ENCODE measurements at regions of chr2 and their contacts with region 1.

Region 1: DNA sequence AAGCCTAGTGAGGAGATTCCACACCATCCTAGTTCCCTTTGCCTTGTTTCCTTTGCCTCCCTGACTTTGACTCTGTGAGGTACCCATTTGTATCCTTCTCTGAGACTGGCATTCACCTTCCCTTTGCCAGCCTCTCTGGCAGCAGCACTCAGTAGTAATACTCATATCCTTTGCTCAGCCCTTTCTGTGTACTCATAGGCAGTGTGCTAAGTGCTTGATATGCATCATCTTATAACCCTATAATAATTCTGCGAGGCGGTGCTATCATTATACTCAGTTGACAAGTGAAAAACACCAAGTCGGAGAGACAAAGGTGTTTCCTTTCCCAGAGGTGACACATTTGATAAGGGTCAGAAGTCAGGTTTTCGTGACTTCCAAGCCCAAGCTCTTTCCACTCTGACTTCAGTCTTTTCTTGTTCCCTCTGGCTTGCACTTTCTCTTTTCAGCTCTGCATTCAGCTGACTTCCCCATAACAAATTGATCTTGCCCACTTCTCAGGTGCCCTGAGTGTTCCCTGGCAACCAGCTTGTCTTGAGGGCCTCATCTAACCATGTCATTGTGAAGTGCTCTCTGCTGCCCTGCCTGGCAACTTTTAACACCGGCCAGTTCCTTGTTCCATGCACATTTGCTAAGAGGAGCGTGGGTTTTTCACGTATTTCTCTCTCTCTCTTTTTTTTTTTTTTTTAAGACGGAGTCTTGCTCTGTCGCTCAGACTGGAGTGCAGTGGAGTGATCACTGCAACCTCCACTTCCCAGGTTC is 94.5 kb upstream of the UPP2 start:
- DNase-seq: peak in 1 of 4 experiments; percentile 26
- ATAC-seq: peak; percentile 64
- H3K4me3 ChIP-seq: no peak overlapping the region
- H3K27ac ChIP-seq: no peak overlapping the region
- H3K4me1 ChIP-seq: peaks cover 0 to 12% of the 10 kb centered on the region in 2 experiments; a peak in 2 of 5 replicates
- H3K27me3 ChIP-seq: no peaks in the 10 kb centered on the region
- CTCF ChIP-seq: peak; percentile 15 to 37 (median 29); a peak in 1 of 6 replicates
- EP300 ChIP-seq: no peak
- POLR2A ChIP-seq: no peak
- RAD21 ChIP-seq: peak in 1 of 2 experiments; percentile 18; a peak in 1 of 4 replicates

Region 2: DNA sequence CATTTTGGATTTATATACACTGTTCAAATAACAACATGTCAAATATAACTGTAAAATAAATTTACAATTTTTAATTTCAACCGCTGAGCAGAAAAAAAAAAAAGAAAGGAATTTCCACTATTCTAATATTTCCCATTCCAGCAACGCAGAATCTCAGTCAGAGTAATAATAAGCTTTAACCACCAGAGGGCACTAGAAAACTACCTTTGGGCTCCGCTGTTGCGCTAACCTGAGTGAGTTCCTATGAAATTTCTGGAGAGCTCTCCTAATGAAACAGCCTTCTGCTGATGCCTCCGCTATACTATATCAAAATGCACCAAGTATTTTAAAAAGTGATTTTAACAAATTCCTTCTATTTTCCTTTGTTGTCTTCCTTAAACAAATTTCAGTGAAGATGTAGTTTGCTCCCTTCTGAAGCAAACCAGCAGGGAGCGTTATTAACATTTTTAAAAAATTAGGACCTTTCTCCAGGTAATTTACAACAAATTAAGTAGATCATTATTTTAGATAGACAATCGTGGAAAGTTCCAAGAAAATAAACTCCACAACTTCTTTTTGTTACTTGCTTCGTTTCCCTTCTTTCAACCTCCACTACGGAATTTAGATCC is 704.5 kb before region 1 on chr2:
- CTCF ChIA-PET with region 1: interaction called, 7 read pairs
- POLR2A ChIA-PET with region 1: no interaction called
- in situ Hi-C with region 1: no loop called
- intact Hi-C with region 1: loop called (anchors 2 kb)
- DNase-seq: peak; percentile 68 to 76 (median 71)
- ATAC-seq: peak; percentile 82
- H3K4me3 ChIP-seq: no peak overlapping the region
- H3K27ac ChIP-seq: no peak overlapping the region
- H3K4me1 ChIP-seq: peaks cover 0 to 17% of the 10 kb centered on the region in 2 experiments; a peak in 2 of 5 replicates
- H3K27me3 ChIP-seq: no peaks in the 10 kb centered on the region
- CTCF ChIP-seq: peak; percentile 76 to 92 (median 79)
- EP300 ChIP-seq: peak; percentile 30; the same call in 1 of the 2 replicates
- POLR2A ChIP-seq: no peak
- RAD21 ChIP-seq: peak; percentile 88 to 89

Region 3: DNA sequence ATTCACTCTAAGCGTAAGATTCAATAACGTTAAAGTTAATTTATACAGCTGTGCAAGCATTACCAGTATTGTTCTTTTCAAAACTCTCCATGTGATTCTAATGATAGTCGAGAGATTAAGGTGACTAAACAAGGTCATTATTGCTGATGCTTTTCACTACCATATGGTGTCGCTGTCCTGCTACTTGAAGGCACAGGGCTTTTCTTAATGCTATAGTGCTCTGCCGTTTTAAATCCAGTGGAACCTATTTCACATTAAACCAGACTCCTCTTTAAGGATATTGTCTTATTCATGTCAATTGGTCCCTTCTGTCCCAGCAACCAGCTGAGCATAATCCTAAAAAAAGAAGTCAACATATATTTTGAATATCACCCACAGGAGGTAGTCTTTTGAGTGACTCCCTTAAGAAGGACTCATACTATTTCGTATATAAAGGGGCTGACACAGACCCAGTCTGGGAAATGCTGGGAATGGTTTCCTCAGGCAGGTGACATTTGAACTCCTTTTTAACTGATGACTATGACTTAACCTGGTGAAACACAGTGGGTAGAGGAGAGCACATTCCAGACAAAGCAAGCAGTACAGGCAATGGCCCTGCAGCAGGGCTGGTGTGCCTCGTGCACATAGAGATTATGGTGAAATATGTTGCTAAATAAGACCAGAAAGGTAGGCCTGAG is 509.4 kb before region 1 on chr2:
- CTCF ChIA-PET with region 1: interaction called, 14 read pairs
- POLR2A ChIA-PET with region 1: no interaction called
- in situ Hi-C with region 1: loop called (anchors 5 kb)
- intact Hi-C with region 1: loop called (anchors 1 kb)
- DNase-seq: peak; percentile 39 to 54 (median 50)
- ATAC-seq: peak; percentile 97
- H3K4me3 ChIP-seq: no peak overlapping the region
- H3K27ac ChIP-seq: no peak overlapping the region
- H3K4me1 ChIP-seq: no peaks in the 10 kb centered on the region
- H3K27me3 ChIP-seq: no peaks in the 10 kb centered on the region
- CTCF ChIP-seq: peak; percentile 80 to 95 (median 89)
- EP300 ChIP-seq: no peak
- POLR2A ChIP-seq: no peak
- RAD21 ChIP-seq: peak; percentile 91 to 98

Region 4: DNA sequence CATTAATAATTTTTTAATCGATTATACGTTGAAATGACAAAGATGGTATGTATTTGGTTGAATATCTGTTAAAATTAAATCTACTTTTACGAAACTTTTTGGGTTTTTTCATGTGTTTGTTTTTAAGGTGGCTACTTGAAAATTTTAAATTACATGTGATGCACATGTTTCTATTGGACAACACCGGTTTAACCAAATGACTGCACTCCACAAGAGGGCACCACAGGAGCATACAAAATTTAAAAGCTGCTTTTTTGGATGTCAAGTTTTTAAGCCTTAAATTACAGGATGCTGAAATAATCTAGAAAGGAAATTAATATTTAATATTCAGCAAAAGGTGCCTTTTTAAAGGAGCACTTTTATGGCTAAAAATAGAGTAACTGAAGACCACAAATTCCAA is 229.7 kb before region 1 on chr2:
- CTCF ChIA-PET with region 1: interaction called, 44 read pairs
- POLR2A ChIA-PET with region 1: interaction called, 5 read pairs
- in situ Hi-C with region 1: loop called (anchors 5 kb)
- intact Hi-C with region 1: loop called (anchors 1 kb)
- DNase-seq: peak; percentile 60 to 70 (median 66)
- ATAC-seq: peak; percentile 67; the same call in 2 of the 3 replicates
- H3K4me3 ChIP-seq: no peak overlapping the region
- H3K27ac ChIP-seq: no peak overlapping the region
- H3K4me1 ChIP-seq: peaks cover 0 to 9% of the 10 kb centered on the region in 2 experiments; a peak in 4 of 5 replicates
- H3K27me3 ChIP-seq: no peaks in the 10 kb centered on the region
- CTCF ChIP-seq: peak; percentile 54 to 86 (median 58); a peak in 4 of 6 replicates
- EP300 ChIP-seq: no peak
- POLR2A ChIP-seq: no peak
- RAD21 ChIP-seq: peak; percentile 93 to 94

Region 5: GRCh38 chr2:157838442-157839161 is 168.5 kb before region 1 on chr2:
- CTCF ChIA-PET with region 1: interaction called, 3 read pairs
- POLR2A ChIA-PET with region 1: no interaction called
- in situ Hi-C with region 1: no loop called
- intact Hi-C with region 1: loop called (anchors 5 kb)
- DNase-seq: peak; percentile 69 to 91 (median 78)
- ATAC-seq: peak; percentile 96
- H3K4me3 ChIP-seq: peak overlapping the region; percentile 30
- H3K27ac ChIP-seq: peak overlapping the region; percentile 93
- H3K4me1 ChIP-seq: peaks cover 14 to 50% of the 10 kb centered on the region in 2 experiments
- H3K27me3 ChIP-seq: no peaks in the 10 kb centered on the region
- CTCF ChIP-seq: no peak
- EP300 ChIP-seq: peak; percentile 86
- POLR2A ChIP-seq: peak; percentile 75
- RAD21 ChIP-seq: peak in 1 of 2 experiments; percentile 11; a peak in 1 of 4 replicates

Region 6: DNA sequence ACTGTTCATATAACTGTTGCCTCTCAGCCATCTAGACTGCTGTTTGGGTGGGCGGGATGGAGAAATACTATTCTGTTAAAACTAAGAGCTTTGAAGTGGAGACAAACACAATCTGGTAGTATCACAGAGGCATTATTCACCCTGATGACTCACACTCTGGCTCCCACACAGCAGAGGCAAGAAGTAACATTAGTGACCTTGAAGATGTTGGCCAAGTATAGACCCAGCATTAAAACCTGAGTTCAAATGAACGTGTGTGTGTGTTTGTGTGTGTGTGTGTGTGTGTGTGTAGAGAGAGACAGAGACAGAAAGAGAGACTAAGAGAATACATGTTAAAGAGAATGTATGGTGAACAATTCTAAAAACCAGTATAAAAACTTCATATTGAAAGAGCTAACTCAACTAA is 108.5 kb before region 1 on chr2:
- CTCF ChIA-PET with region 1: no interaction called
- POLR2A ChIA-PET with region 1: no interaction called
- in situ Hi-C with region 1: loop called (anchors 10 kb)
- intact Hi-C with region 1: loop called (anchors 1 kb)
- DNase-seq: peak; percentile 46 to 88 (median 63)
- ATAC-seq: peak; percentile 90
- H3K4me3 ChIP-seq: no peak overlapping the region
- H3K27ac ChIP-seq: peak overlapping the region; percentile 40; the same call in 2 of the 3 replicates
- H3K4me1 ChIP-seq: peaks cover 23 to 40% of the 10 kb centered on the region in 2 experiments
- H3K27me3 ChIP-seq: no peaks in the 10 kb centered on the region
- CTCF ChIP-seq: no peak
- EP300 ChIP-seq: peak; percentile 69; the same call in 1 of the 2 replicates
- POLR2A ChIP-seq: no peak
- RAD21 ChIP-seq: peak in 1 of 2 experiments; percentile 11; a peak in 1 of 4 replicates

Region 7: GRCh38 chr2:157952558-157952957 is 54.6 kb before region 1 on chr2:
- CTCF ChIA-PET with region 1: no interaction called
- POLR2A ChIA-PET with region 1: no interaction called
- in situ Hi-C with region 1: no loop called
- intact Hi-C with region 1: no loop called
- DNase-seq: no peak
- ATAC-seq: no peak; the same call in 2 of the 3 replicates
- H3K4me3 ChIP-seq: no peak overlapping the region
- H3K27ac ChIP-seq: no peak overlapping the region
- H3K4me1 ChIP-seq: no peaks in the 10 kb centered on the region
- H3K27me3 ChIP-seq: no peaks in the 10 kb centered on the region
- CTCF ChIP-seq: no peak
- EP300 ChIP-seq: no peak
- POLR2A ChIP-seq: no peak
- RAD21 ChIP-seq: no peak

Region 8: GRCh38 chr2:158045362-158045761 is 38.2 kb after region 1 on chr2:
- CTCF ChIA-PET with region 1: no interaction called
- POLR2A ChIA-PET with region 1: no interaction called
- in situ Hi-C with region 1: no loop called
- intact Hi-C with region 1: no loop called
- DNase-seq: peak in 1 of 4 experiments; percentile 27
- ATAC-seq: peak; percentile 68
- H3K4me3 ChIP-seq: no peak overlapping the region
- H3K27ac ChIP-seq: no peak overlapping the region
- H3K4me1 ChIP-seq: peaks cover 0 to 12% of the 10 kb centered on the region in 2 experiments; a peak in 3 of 5 replicates
- H3K27me3 ChIP-seq: no peaks in the 10 kb centered on the region; a peak in 1 of 5 replicates
- CTCF ChIP-seq: peak; percentile 59 to 95 (median 90)
- EP300 ChIP-seq: no peak
- POLR2A ChIP-seq: no peak
- RAD21 ChIP-seq: peak; percentile 56 to 68

Measured in K562 (cell line).